ENCODE measurements at regions of chr11 and their contacts with region 1.

Region 1: GRCh38 chr11:13970986-13971385 is 8.5 kb downstream of the SPON1 start:
- DNase-seq: no peak

Region 2: GRCh38 chr11:14029971-14030920 is 59.3 kb after region 1 on chr11:
- intact Hi-C with region 1: loop called (anchors 5 kb)
- DNase-seq: peak; percentile 86

Measured in cardiac septum (tissue), 1 donor.